ENCODE measurements at regions of chr20 and their contacts with region 1.

Region 1: GRCh38 chr20:36605399-36606157 is at the start of gene RAB5IF:
- DNase-seq: peak; percentile 100
- H3K4me3 Mint-ChIP-seq: peak within 1 kb of the TSS; percentile 99
- H3K27ac Mint-ChIP-seq: peak within 1 kb of the TSS; percentile 97
- H3K4me1 Mint-ChIP-seq: peaks cover 28% of the 10 kb centered on the region
- H3K27me3 Mint-ChIP-seq: no peaks in the 10 kb centered on the region
- total RNA-seq, gene RAB5IF: 113 to 114 TPM

Region 2: GRCh38 chr20:36532388-36532787 is 73.2 kb before region 1 on chr20:
- CTCF ChIA-PET with region 1: no interaction called
- POLR2A ChIA-PET with region 1: no interaction called
- intact Hi-C with region 1: no loop called
- DNase-seq: no peak
- H3K4me3 Mint-ChIP-seq: no peak overlapping the region
- H3K27ac Mint-ChIP-seq: no peak overlapping the region
- H3K4me1 Mint-ChIP-seq: no peaks in the 10 kb centered on the region
- H3K27me3 Mint-ChIP-seq: no peaks in the 10 kb centered on the region

Region 3: GRCh38 chr20:36550797-36551299 is 54.7 kb before region 1 on chr20:
- CTCF ChIA-PET with region 1: no interaction called
- POLR2A ChIA-PET with region 1: no interaction called
- intact Hi-C with region 1: loop called (anchors 1 kb)
- DNase-seq: no peak
- H3K4me3 Mint-ChIP-seq: no peak overlapping the region
- H3K27ac Mint-ChIP-seq: no peak overlapping the region
- H3K4me1 Mint-ChIP-seq: no peaks in the 10 kb centered on the region
- H3K27me3 Mint-ChIP-seq: no peaks in the 10 kb centered on the region

Region 4: DNA sequence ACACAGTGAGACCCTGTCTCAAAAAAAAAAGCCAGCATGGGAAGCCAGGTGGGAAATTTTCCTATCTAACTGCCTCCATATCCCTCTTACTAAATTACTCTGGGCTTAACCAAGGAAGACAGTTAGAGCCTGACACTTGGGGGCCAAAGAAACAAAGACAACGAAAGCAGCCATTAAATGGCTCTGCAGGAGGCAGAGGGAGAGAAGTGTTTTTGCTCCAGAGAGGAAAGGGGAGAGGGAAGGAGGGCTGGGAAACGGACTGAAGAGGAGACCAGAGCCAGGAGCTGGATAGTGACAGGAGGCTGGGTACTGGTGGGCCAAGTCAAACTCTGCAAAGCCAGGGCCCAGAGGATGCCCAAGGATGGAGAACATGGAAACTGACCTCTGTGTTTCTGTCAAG is 42.9 kb before region 1 on chr20:
- CTCF ChIA-PET with region 1: interaction called, 23 read pairs
- POLR2A ChIA-PET with region 1: interaction called, 4 read pairs
- intact Hi-C with region 1: no loop called
- DNase-seq: no peak
- H3K4me3 Mint-ChIP-seq: no peak overlapping the region
- H3K27ac Mint-ChIP-seq: no peak overlapping the region
- H3K4me1 Mint-ChIP-seq: peaks cover 3% of the 10 kb centered on the region
- H3K27me3 Mint-ChIP-seq: no peaks in the 10 kb centered on the region

Region 5: DNA sequence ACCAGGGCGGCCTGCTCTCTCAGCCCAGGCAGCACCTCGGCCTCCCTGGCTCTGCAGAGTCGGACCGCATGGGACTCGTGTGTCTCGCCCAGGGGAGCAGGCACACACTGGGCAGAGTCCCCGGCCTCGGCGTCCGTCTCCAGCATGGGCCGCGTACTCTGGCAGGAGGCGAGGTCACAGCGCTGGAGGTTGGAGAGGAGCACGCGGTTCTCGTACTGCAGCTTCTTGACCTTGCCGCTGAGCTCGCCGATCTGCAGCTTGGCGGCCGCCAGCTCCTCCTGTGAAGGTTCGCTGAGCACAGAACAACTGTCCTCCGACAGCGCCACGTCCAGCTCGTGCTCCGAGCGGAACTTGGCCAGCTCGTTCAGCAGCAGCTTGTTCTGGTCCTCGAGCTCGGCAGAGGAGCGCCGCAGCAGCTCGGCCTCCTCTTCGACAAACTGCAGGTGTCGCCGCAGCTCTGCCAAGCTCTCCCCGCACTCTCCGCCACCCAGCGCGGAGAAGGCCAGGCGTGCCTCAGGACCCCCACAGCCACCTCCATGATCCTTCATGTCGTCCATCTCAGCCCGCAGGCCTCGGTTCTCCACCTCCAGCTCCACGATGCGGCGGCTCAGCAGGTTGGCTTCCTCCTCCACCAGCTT is 210.0 kb after region 1 on chr20:
- CTCF ChIA-PET with region 1: no interaction called
- POLR2A ChIA-PET with region 1: no interaction called
- intact Hi-C with region 1: no loop called
- DNase-seq: no peak
- H3K4me3 Mint-ChIP-seq: no peak overlapping the region
- H3K27ac Mint-ChIP-seq: no peak overlapping the region
- H3K4me1 Mint-ChIP-seq: no peaks in the 10 kb centered on the region
- H3K27me3 Mint-ChIP-seq: no peaks in the 10 kb centered on the region

Region 6: DNA sequence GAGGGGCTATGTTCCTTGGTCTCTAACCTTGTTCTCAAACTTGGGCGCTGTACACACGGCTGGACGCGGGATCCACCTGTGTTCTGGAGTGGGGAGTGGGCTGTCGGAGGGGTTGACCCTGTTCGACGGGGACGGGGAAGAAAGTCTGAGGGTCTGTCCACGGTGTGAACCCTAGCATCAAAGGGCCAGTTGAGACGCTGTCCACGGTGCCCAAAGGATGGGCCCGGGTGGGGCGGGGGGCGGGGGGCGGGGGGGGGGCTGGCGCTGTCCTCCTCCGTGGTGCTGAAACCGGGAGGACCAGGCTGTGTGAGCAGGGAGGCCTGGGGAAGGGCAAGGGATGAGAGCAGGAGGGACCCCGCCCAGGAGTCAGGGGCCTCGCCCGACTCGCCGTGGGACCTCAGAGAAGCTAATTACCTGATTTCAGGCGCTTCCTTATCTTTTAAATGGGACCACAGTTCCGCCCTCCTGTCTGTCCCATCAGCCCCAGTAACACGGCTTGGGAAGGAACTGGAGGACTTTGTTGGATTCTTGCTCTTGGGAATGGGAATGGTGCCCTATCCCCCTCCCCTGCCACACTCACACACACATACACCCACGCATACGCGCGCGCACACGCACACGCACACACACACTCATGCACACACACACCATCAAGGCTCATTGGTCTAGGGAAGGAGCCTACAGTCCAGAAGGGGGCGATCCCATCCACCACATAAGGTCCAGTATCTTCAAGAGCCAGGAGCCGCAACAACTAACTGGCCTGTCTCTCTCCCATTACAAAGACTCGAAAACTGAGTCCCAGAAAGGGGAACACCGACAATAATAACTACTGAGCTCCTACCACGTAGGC is 1296.3 kb after region 1 on chr20:
- CTCF ChIA-PET with region 1: no interaction called
- POLR2A ChIA-PET with region 1: no interaction called
- intact Hi-C with region 1: no loop called
- DNase-seq: peak; percentile 55
- H3K4me3 Mint-ChIP-seq: peak overlapping the region; percentile 31
- H3K27ac Mint-ChIP-seq: no peak overlapping the region
- H3K4me1 Mint-ChIP-seq: peaks cover 14% of the 10 kb centered on the region
- H3K27me3 Mint-ChIP-seq: peaks cover 59% of the 10 kb centered on the region